PC-9 (cell line): ENCODE measurements at regions of chr5 and their contacts with region 1.

Region 1: GRCh38 chr5:40688127-40688761 is 8.5 kb downstream of the PTGER4 start:
- DNase-seq: peak; percentile 80 to 93
- H3K4me3 ChIP-seq: no peak overlapping the region
- H3K27ac ChIP-seq: 0 out of 2 replicates have a peak overlapping the region, but pooled peaks have one; percentile 2
- H3K4me1 ChIP-seq: peaks cover 52% of the 10 kb centered on the region
- H3K27me3 ChIP-seq: no peaks in the 10 kb centered on the region
- CTCF ChIP-seq: peak; percentile 98

Region 2: DNA sequence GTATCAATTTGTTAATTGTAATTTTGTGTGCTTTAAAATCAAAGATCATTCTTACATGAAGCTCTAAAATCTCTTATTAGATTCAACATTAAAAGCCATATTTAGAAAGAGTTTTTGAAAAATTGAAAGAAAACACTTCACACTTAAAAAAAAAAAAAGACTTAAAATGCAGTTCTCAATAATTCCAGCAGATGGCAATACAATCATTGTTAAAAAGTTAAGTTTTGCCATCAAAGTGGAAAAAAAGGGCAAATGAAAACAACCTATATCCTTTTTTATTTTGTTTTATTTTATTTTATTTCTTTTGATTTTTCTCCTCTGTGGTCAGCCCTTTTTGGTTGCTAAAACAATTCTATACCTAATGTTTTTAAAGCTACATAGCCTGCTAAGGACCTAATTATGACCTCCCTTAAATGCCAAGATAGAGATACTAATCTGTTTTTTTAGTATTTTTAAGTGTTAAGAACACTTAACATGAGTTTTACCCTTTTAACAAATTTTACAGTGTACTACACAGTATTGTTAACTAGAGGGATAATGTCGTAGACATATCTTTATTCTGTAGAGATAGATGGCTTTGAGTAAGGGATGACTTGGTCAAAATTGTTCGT is 1109.3 kb before region 1 on chr5:
- CTCF ChIA-PET with region 1: interaction called, 3 read pairs
- POLR2A ChIA-PET with region 1: no interaction called
- intact Hi-C with region 1: loop called (anchors 1 kb)
- DNase-seq: no peak
- H3K4me3 ChIP-seq: no peak overlapping the region
- H3K27ac ChIP-seq: no peak overlapping the region
- H3K4me1 ChIP-seq: no peaks in the 10 kb centered on the region
- H3K27me3 ChIP-seq: no peaks in the 10 kb centered on the region
- CTCF ChIP-seq: peak; percentile 92

Region 3: GRCh38 chr5:39648532-39649213 is 1039.6 kb before region 1 on chr5:
- CTCF ChIA-PET with region 1: interaction called, 5 read pairs
- POLR2A ChIA-PET with region 1: interaction called, 8 read pairs
- intact Hi-C with region 1: loop called (anchors 2 kb)
- DNase-seq: peak; percentile 61 to 66
- H3K4me3 ChIP-seq: no peak overlapping the region
- H3K27ac ChIP-seq: no peak overlapping the region
- H3K4me1 ChIP-seq: 0 out of 2 replicates have a peak, but pooled peaks cover 4% of the 10 kb centered on the region
- H3K27me3 ChIP-seq: no peaks in the 10 kb centered on the region
- CTCF ChIP-seq: no peak

Region 4: DNA sequence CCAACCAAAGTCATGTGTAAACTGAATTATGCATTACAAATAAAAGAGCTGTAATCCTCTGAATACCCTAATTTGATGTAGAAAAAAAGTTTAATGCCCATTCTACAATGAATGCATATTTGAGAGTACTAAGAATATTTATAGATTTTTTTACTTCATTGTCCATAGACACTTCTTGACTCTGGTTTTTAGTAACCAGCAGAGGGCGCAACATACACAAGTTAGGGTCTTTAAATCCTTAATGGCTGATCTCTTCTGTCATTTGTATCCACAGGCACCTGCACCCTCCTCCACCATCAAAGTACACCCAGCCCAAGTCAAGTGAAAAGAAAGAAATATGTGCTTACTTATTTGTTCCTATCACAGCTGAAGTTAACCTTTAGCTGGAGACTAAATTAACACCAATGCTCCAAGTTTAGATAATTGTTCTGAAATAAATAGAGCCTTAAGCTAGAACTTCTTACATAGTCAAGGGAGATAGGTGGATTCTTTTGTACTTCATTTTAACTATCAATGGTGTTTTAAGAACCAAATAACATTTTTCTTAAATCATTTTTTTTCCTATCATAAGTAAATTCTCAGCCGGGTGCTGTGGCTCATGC is 739.3 kb before region 1 on chr5:
- CTCF ChIA-PET with region 1: interaction called, 7 read pairs
- POLR2A ChIA-PET with region 1: no interaction called
- intact Hi-C with region 1: loop called (anchors 1 kb)
- DNase-seq: peak; percentile 56 to 66
- H3K4me3 ChIP-seq: no peak overlapping the region
- H3K27ac ChIP-seq: no peak overlapping the region
- H3K4me1 ChIP-seq: no peaks in the 10 kb centered on the region
- H3K27me3 ChIP-seq: no peaks in the 10 kb centered on the region
- CTCF ChIP-seq: peak; percentile 96

Region 5: DNA sequence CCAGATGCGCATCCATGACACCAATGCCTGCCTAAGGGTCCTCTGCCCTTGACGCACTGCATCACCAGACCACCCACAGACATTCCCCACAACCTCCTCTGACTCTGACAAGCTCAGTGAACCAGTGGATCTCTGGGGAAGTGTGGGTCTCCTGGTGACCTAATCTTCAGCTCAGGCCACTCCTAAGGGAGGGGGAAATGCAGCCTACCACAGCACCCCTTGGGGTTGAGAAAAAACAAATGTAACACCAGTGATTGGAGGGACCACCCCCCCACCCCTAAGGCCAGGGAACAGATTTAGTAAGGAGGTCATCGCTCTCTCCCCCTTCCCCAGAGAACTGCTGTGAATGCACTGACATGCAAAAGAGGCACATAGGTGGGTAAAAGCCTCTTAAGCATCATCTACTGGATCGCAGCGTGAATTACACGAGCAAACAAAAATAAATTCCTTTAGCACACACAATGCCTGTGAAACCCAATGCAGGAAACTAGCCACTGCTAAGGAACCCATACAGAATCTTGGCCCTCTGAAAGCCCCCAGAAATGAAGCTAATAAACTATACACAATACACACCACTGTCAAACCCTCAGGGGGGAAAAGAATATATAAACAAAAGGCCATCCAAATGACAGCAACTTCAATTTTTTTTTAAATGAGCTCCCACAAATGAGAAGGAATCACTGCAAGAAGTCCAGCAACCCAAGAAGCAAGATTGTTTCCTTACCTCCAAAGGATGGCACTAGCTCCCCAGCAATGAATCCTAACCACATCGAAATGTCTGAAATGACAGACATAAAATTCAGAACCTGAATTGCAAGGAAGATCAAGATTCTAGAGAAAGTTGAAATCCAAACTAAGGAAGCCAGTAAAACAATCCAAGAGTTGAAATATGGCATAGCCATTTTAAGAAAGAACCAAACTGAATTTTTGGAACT is 522.2 kb before region 1 on chr5:
- CTCF ChIA-PET with region 1: no interaction called
- POLR2A ChIA-PET with region 1: no interaction called
- intact Hi-C with region 1: loop called (anchors 1 kb)
- DNase-seq: no peak
- H3K4me3 ChIP-seq: no peak overlapping the region
- H3K27ac ChIP-seq: no peak overlapping the region
- H3K4me1 ChIP-seq: no peaks in the 10 kb centered on the region
- H3K27me3 ChIP-seq: no peaks in the 10 kb centered on the region
- CTCF ChIP-seq: 0 out of 2 replicates have a peak, but pooled peaks have one; percentile 30

Region 6: GRCh38 chr5:40277161-40277906 is 410.9 kb before region 1 on chr5:
- CTCF ChIA-PET with region 1: no interaction called
- POLR2A ChIA-PET with region 1: no interaction called
- intact Hi-C with region 1: no loop called
- DNase-seq: no peak
- H3K4me3 ChIP-seq: no peak overlapping the region
- H3K27ac ChIP-seq: no peak overlapping the region
- H3K4me1 ChIP-seq: no peaks in the 10 kb centered on the region
- H3K27me3 ChIP-seq: no peaks in the 10 kb centered on the region
- CTCF ChIP-seq: no peak

Region 7: DNA sequence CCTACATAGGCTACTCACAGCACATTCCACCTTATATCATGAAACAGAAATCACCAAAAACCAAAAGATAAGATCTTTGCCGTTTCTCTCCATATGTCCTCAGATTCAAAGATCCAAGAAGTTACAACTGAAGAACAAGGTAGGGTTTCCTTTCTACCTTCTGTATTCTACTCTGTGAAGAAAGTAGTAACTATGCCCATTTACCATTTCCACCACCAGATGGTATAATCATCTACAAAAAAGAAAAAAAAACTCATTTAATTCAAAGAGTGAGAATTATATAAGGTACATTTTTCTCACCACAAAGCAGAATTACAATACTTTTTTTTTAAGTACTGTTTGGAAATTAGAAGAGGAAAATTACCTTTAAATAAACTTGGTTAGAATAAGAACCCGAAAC is 181.1 kb before region 1 on chr5:
- CTCF ChIA-PET with region 1: no interaction called
- POLR2A ChIA-PET with region 1: no interaction called
- intact Hi-C with region 1: no loop called
- DNase-seq: no peak
- H3K4me3 ChIP-seq: no peak overlapping the region
- H3K27ac ChIP-seq: no peak overlapping the region
- H3K4me1 ChIP-seq: no peaks in the 10 kb centered on the region
- H3K27me3 ChIP-seq: no peaks in the 10 kb centered on the region
- CTCF ChIP-seq: no peak

Region 8: DNA sequence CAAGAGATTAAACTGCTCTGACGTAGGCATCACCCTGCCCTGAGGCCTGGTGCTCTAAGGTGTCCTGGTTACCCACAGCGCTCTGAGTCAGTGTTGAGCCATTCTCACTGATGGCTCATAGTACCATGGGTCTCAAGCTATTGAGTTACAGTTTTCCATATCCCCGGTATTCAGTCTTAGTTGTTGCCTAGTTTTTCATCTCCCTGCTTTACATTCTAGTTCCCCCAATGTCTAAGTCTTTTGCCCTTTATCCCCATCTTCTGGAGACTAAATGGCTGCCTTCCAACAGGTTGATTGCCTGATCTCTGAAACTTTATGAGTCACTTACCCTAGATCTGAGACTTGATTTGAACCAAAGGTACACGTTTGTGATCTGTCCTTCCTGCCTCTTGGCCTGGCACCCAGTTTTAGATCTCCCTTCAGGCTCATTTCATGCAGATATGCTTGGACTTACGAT is 169.7 kb before region 1 on chr5:
- CTCF ChIA-PET with region 1: interaction called, 3 read pairs
- POLR2A ChIA-PET with region 1: no interaction called
- intact Hi-C with region 1: loop called (anchors 2 kb)
- DNase-seq: peak; percentile 96 to 98
- H3K4me3 ChIP-seq: no peak overlapping the region
- H3K27ac ChIP-seq: peak overlapping the region; percentile 84
- H3K4me1 ChIP-seq: peaks cover 33% of the 10 kb centered on the region
- H3K27me3 ChIP-seq: no peaks in the 10 kb centered on the region
- CTCF ChIP-seq: no peak

Region 9: DNA sequence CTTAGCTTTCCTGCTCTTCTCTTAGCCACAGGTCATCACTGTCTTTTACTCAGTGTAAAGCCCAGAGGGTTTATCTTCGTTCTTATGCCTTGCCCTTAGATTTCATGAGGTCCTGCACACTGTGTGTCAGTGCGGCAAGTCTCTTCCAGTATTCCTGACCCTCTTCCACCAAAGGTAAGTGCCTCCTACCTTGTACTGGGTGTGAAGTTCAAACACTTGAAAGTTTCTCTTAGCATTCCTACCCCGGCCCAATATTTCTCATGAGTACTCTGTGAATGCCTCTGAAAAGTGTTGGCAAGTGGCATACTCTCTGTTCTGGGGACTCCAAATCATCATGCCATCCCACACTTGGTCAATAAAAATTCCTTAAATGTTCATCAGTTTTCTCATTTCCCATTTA is 1274.2 kb after region 1 on chr5:
- CTCF ChIA-PET with region 1: no interaction called
- POLR2A ChIA-PET with region 1: no interaction called
- intact Hi-C with region 1: no loop called
- DNase-seq: no peak
- H3K4me3 ChIP-seq: no peak overlapping the region
- H3K27ac ChIP-seq: no peak overlapping the region
- H3K4me1 ChIP-seq: no peaks in the 10 kb centered on the region
- H3K27me3 ChIP-seq: no peaks in the 10 kb centered on the region
- CTCF ChIP-seq: no peak